ENCODE measurements at regions of chr11 and their contacts with region 1.

Region 1: DNA sequence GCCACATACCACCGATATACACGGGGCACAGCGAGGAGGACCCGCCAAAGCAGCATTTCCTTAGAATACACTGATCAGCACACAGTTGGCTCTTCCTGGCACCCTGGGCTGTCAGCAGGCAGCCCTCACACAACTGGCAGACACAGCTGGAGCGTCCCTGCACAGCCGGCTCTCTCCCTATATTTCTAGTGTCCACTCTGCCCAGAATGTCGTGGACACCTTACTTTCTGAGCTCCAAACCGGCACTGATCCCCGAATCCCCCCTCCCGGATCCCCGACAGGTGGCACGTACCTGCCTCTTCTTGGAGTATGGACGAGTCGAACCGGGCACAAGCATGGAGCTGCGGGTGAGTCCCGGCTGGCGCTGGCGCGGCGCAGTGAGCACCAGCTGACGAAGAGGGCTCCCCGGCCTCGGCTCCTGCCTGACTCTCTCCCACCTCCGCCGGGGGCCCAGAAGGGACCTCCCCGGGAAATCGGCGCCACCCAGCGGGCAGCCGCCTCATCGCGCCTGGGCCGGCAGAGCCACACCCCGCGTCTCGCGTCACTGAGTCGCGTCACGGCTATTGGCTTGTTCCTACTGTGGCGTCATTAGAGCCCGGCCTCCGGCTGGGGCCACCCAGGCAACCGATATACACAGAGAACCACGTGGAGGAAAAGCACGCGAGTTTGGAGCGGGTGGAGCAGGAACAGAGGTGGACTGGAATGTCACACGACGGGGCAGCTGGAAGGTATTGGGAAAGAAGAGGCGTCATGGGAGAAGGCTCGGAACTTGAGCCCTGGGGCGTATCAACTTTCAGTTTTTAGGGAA is at the start of gene USP2:
- DNase-seq: peak; percentile 96
- ATAC-seq: peak; percentile 99
- H3K4me3 Mint-ChIP-seq: no peak within 1 kb of the TSS
- H3K27ac Mint-ChIP-seq: peak within 1 kb of the TSS; percentile 21
- H3K4me1 Mint-ChIP-seq: no peaks in the 10 kb centered on the region
- H3K27me3 Mint-ChIP-seq: peaks cover 3% of the 10 kb centered on the region
- CTCF ChIP-seq: peak; percentile 46
- total RNA-seq, gene USP2: 0.24 TPM in 1 of 2 replicates, not detected in the other

Region 2: DNA sequence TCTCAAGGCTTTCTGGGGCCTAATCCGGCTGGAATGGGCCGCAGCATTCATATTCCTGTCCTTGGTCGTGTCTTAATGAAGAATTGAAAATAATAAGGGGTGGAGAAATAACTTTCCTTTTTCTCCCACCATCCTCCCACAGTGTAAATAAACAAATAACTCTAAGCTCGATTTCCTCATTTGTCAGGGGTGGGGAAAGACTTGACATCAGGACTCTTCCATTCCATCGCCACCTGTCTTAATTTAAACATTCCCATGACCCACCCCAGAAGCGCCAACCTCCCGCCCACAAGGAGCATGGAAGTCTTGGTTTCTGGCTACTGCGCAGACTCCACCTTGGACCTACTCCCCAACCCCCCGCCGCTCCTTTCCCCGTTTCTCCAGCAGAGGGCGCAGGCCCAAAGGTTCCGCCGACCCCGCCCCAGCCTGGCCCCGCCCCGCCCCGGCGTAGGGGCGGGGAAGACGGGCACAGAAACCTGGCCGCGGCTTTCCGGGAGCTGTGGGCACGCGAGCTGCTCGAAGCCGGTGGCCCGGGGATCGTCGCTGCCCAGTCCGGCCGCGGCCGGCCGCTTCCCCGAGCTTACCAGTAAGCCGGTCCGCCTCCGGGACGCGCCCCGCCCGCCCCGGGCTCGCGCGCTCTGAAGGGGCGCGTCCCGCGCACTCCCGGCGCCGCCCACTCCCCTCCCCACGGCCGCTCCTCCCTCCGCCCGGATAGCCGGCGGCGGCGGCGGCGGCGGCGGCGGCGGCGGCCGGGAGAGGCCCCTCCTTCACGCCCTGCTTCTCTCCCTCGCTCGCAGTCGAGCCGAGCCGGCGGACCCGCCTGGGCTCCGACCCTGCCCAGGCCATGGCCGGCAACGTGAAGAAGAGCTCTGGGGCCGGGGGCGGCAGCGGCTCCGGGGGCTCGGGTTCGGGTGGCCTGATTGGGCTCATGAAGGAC is 175.5 kb before region 1 on chr11 and contains the start of gene CBL:
- CTCF ChIA-PET with region 1: no interaction called
- POLR2A ChIA-PET with region 1: interaction called, 3 read pairs
- intact Hi-C with region 1: loop called (anchors 2 kb)
- DNase-seq: peak; percentile 95
- ATAC-seq: peak; percentile 86
- H3K4me3 Mint-ChIP-seq: peak within 1 kb of the TSS; percentile 96
- H3K27ac Mint-ChIP-seq: peak within 1 kb of the TSS; percentile 90
- H3K4me1 Mint-ChIP-seq: peaks cover 31% of the 10 kb centered on the region
- H3K27me3 Mint-ChIP-seq: no peaks in the 10 kb centered on the region
- CTCF ChIP-seq: no peak
- total RNA-seq, gene CBL: 26.2 and 27.8 TPM in 2 replicates

Region 3: DNA sequence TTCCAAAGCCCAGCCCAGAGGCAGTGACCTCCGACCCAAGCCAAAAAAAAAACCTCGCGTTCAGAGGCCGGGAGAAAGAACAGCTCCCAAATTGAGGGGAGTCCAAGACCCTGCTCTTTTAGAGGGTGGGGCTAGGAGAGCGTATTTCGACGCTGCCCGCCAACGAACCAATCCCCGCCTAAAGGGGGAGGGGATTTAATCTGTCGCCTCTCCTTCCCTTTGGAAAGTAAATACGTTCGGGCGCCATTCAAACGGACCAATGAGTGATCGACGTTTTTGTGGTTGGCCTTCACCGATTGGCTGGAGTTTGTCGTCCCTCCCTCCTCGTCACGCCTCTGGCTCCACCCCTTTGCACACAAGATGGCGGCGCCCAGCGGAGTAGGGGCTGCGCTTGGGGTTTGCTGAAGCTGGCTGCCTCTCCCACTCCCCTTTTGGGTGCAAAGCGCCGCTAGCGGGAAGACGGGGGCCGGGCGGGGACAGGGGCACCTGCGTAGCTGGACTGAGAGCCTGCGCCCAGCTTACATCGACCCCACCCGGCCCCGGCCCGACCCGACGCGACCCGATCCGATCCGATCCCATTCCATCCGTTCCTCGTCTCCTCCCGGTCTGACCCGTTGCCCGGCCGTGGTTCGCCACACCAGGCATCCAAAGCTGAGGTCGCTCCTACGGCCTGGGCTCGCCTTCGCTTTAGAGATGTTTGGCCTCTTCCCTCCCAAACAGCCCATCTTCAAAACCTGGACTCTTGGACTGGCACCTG is 47.0 kb before region 1 on chr11 and contains the start of gene RNF26:
- CTCF ChIA-PET with region 1: interaction called, 3 read pairs
- POLR2A ChIA-PET with region 1: interaction called, 9 read pairs
- intact Hi-C with region 1: loop called (anchors 1 kb)
- DNase-seq: peak; percentile 87
- ATAC-seq: peak; percentile 97
- H3K4me3 Mint-ChIP-seq: peak within 1 kb of the TSS; percentile 99
- H3K27ac Mint-ChIP-seq: peak within 1 kb of the TSS; percentile 93
- H3K4me1 Mint-ChIP-seq: peaks cover 31% of the 10 kb centered on the region
- H3K27me3 Mint-ChIP-seq: peaks cover 9% of the 10 kb centered on the region
- CTCF ChIP-seq: no peak
- total RNA-seq, gene RNF26: 20.1 and 21.2 TPM in 2 replicates

Region 4: GRCh38 chr11:119363851-119364590 is 17.4 kb before region 1 on chr11:
- CTCF ChIA-PET with region 1: interaction called, 3 read pairs
- POLR2A ChIA-PET with region 1: no interaction called
- intact Hi-C with region 1: loop called (anchors 1 kb)
- DNase-seq: peak; percentile 63
- ATAC-seq: peak; percentile 96
- H3K4me3 Mint-ChIP-seq: peak overlapping the region; percentile 76
- H3K27ac Mint-ChIP-seq: no peak overlapping the region
- H3K4me1 Mint-ChIP-seq: peaks cover 10% of the 10 kb centered on the region
- H3K27me3 Mint-ChIP-seq: peaks cover 41% of the 10 kb centered on the region
- CTCF ChIP-seq: no peak

Region 5: GRCh38 chr11:119752345-119752871 is 371.0 kb after region 1 on chr11:
- CTCF ChIA-PET with region 1: no interaction called
- POLR2A ChIA-PET with region 1: no interaction called
- intact Hi-C with region 1: loop called (anchors 2 kb)
- DNase-seq: no peak
- ATAC-seq: peak; percentile 73
- H3K4me3 Mint-ChIP-seq: peak overlapping the region; percentile 84
- H3K27ac Mint-ChIP-seq: peak overlapping the region; percentile 94
- H3K4me1 Mint-ChIP-seq: peaks cover 35% of the 10 kb centered on the region
- H3K27me3 Mint-ChIP-seq: peaks cover 4% of the 10 kb centered on the region
- CTCF ChIP-seq: no peak